Left lung (tissue), 14 donors: ENCODE measurements at regions of chr11 and their contacts with region 1.

Region 1: GRCh38 chr11:122781378-122782195 is 56.7 kb upstream of the CRTAM start:
- DNase-seq: peak; percentile 86 to 92 (median 89)
- ATAC-seq: peak; percentile 97
- H3K4me3 ChIP-seq: no peak overlapping the region
- H3K27ac ChIP-seq: no peak overlapping the region
- H3K4me1 ChIP-seq: peaks cover 0 to 39% of the 10 kb centered on the region in 2 donors
- H3K27me3 ChIP-seq: no peaks in the 10 kb centered on the region
- CTCF ChIP-seq: peak; percentile 93 to 94

Region 2: GRCh38 chr11:122491509-122491908 is 290.1 kb before region 1 on chr11:
- intact Hi-C with region 1: no loop called
- DNase-seq: peak in 2 of 4 donors; percentile 23 to 47
- ATAC-seq: peak; percentile 53
- H3K4me3 ChIP-seq: no peak overlapping the region
- H3K27ac ChIP-seq: no peak overlapping the region
- H3K4me1 ChIP-seq: no peaks in the 10 kb centered on the region
- H3K27me3 ChIP-seq: no peaks in the 10 kb centered on the region
- CTCF ChIP-seq: no peak

Region 3: GRCh38 chr11:122633219-122633829 is 148.3 kb before region 1 on chr11:
- intact Hi-C with region 1: loop called in 1 of 2 experiments (anchors 5 kb)
- DNase-seq: peak in 2 of 4 donors; percentile 16 to 51
- ATAC-seq: peak; percentile 66
- H3K4me3 ChIP-seq: no peak overlapping the region
- H3K27ac ChIP-seq: no peak overlapping the region
- H3K4me1 ChIP-seq: no peaks in the 10 kb centered on the region
- H3K27me3 ChIP-seq: no peaks in the 10 kb centered on the region
- CTCF ChIP-seq: peak; percentile 9 to 39

Region 4: GRCh38 chr11:122822241-122822640 is 40.7 kb after region 1 on chr11:
- intact Hi-C with region 1: no loop called
- DNase-seq: no peak
- ATAC-seq: no peak
- H3K4me3 ChIP-seq: no peak overlapping the region
- H3K27ac ChIP-seq: no peak overlapping the region
- H3K4me1 ChIP-seq: peaks cover 0 to 3% of the 10 kb centered on the region in 2 donors
- H3K27me3 ChIP-seq: no peaks in the 10 kb centered on the region
- CTCF ChIP-seq: no peak

Region 5: DNA sequence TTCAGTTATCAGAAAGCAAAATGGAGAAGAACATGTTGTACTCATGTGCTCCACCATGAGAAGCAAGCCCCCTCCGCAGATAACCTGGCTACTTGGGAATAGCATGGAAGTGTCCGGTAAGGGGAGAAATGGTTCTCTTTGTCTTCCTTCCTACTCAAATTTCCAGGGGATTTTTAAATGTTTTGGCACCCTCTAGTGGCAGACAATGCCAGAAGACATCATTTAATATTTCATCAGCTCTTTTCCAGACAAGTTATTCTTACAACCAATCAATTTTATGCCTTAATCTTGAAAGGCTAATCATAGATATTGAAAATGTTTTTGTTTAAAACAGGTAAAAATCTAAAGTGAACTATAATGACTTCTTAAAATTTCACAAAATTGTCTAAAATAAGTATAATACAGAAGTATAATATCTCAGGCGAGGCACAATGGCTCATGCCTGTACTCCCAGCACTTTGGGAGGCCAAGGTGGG is 72.4 kb after region 1 on chr11:
- intact Hi-C with region 1: no loop called
- DNase-seq: peak in 2 of 4 donors; percentile 72 to 84
- ATAC-seq: peak; percentile 78
- H3K4me3 ChIP-seq: no peak overlapping the region
- H3K27ac ChIP-seq: no peak overlapping the region
- H3K4me1 ChIP-seq: peaks cover 0 to 12% of the 10 kb centered on the region in 2 donors
- H3K27me3 ChIP-seq: no peaks in the 10 kb centered on the region
- CTCF ChIP-seq: peak; percentile 51 to 71